Naive thymus-derived CD4-positive, alpha-beta T cell (primary cell): ENCODE measurements at regions of chr19 and their contacts with region 1.

Region 1: GRCh38 chr19:39445265-39446111 is at the start of gene SUPT5H:
- DNase-seq: peak; percentile 84 to 99 (median 97)
- ATAC-seq: peak; percentile 96
- H3K4me3 ChIP-seq: peak within 1 kb of the TSS; percentile 77
- H3K4me3 Mint-ChIP-seq: peak within 1 kb of the TSS; percentile 91 to 100 (median 97)
- H3K27ac ChIP-seq: peak within 1 kb of the TSS; percentile 98
- H3K27ac Mint-ChIP-seq: peak within 1 kb of the TSS; percentile 95 to 100 (median 99)
- H3K4me1 ChIP-seq: peaks cover 35 to 47% of the 10 kb centered on the region in 2 donors
- H3K4me1 Mint-ChIP-seq: peaks cover 38 to 61% (median 48%) of the 10 kb centered on the region in 7 donors
- H3K27me3 ChIP-seq: no peaks in the 10 kb centered on the region
- H3K27me3 Mint-ChIP-seq: no peaks in the 10 kb centered on the region
- total RNA-seq, gene SUPT5H: 180 to 247 (median 203) TPM

Region 2: GRCh38 chr19:39052243-39052746 is 393.2 kb before region 1 on chr19:
- CTCF ChIA-PET with region 1: no interaction called
- POLR2A ChIA-PET with region 1: no interaction called
- intact Hi-C with region 1: no loop called
- DNase-seq: peak; percentile 38 to 73 (median 57)
- ATAC-seq: peak; percentile 63
- H3K4me3 ChIP-seq: no peak overlapping the region
- H3K4me3 Mint-ChIP-seq: no peak overlapping the region
- H3K27ac ChIP-seq: no peak overlapping the region
- H3K27ac Mint-ChIP-seq: no peak overlapping the region
- H3K4me1 ChIP-seq: no peaks in the 10 kb centered on the region
- H3K4me1 Mint-ChIP-seq: no peaks in the 10 kb centered on the region
- H3K27me3 ChIP-seq: no peaks in the 10 kb centered on the region
- H3K27me3 Mint-ChIP-seq: peaks cover 0 to 3% (median 0%) of the 10 kb centered on the region in 5 donors

Region 3: DNA sequence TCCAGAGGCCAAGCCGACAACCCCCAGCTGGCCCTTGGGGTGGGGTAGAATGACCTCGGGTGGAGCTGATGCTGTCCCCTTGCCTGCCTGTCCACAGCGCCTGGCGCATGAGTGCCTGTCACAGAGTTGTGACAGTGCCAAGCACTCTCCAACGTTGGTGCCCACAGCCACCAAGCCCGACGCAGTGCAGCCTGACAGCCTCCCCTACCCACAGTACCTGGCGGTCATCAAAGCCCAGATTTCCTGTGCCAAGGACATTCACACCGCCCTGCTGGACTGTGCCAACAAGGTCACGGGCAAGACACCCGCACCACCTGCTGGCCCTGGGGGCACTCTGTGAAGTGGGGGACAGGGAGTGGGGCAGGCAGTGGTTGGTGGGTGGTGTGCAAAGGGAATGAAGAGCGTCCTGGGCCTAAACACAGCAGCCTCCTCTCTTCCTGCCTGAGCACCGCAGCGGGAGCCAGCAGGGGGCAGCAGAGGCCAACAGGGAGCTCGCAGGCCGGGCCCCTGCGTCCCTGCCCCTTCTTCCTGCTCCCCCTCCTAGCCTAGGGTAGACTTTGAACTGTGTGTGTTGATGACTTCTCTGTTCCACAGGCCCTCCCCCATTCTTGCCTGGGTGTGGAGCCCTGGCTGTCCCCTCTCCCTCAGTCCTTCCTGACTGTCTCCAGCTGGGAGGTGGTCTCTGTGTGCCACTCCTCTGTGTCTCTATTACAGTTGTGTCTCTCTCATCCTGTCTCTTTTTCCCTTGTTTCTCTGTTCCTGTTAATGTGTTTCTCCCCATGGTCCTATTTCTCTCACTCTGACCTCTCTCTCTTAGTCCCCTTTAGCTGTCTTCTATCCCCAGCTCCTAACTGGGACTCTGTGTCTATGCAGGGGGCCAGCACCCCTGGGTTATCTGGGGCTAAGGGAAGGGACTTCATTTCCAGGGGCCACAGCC is 47.9 kb before region 1 on chr19:
- CTCF ChIA-PET with region 1: no interaction called
- POLR2A ChIA-PET with region 1: interaction called, 26 read pairs
- intact Hi-C with region 1: no loop called
- DNase-seq: peak; percentile 88 to 97 (median 93)
- ATAC-seq: peak; percentile 71
- H3K4me3 ChIP-seq: peak overlapping the region; percentile 57
- H3K4me3 Mint-ChIP-seq: peak overlapping the region in 9 of 10 donors; percentile 48 to 80 (median 74)
- H3K27ac ChIP-seq: peak overlapping the region; percentile 63
- H3K27ac Mint-ChIP-seq: peak overlapping the region; percentile 84 to 96 (median 93)
- H3K4me1 ChIP-seq: peaks cover 39 to 42% of the 10 kb centered on the region in 2 donors
- H3K4me1 Mint-ChIP-seq: peaks cover 27 to 68% (median 56%) of the 10 kb centered on the region in 7 donors
- H3K27me3 ChIP-seq: no peaks in the 10 kb centered on the region
- H3K27me3 Mint-ChIP-seq: no peaks in the 10 kb centered on the region

Region 4: DNA sequence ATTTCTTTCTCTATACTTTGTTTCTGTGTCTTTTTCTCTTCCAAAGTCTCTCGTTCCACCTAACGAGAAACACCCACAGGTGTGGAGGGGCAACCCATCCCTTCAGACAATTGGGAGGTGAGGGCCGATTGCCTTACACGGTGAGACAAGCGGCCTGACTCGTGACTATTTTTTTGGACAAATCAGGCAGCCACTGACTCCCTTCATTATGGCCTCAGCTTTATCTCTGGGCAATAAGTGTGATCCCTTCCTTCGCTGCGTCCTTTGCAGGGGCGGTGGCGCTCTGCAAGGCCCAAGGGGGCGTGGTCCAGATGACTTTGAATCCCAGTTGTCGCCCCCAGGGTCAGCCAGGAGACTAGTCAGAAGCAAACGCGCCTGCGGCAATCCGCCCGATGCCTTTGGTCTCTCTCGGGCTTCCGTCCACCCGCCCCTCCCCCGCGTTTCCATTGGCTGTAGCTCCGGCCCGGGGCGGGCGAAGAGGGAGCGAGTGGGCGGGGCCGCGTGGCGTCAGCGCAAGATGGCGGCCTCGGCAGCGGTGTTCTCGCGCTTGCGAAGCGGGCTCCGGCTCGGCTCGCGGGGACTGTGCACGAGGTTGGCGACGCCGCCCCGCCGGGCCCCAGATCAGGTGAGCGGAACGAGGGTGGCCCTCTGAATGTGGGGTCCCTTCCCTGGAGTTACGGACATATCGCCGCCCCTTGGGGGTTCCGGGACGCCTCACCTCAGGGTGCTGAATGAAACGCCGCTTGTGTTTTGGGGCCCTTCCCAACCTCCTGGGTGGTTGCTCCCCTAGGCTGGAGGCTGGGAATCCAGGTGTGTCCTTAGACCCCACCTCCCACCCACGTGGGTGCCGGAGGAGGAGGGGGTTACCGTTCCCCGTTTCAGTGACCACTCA is 35.1 kb after region 1 on chr19 and contains the start of gene TIMM50:
- CTCF ChIA-PET with region 1: no interaction called
- POLR2A ChIA-PET with region 1: interaction called, 5 read pairs
- intact Hi-C with region 1: loop called (anchors 1 kb)
- DNase-seq: peak; percentile 93 to 98 (median 95)
- ATAC-seq: peak; percentile 100
- H3K4me3 ChIP-seq: peak within 1 kb of the TSS; percentile 74
- H3K4me3 Mint-ChIP-seq: peak within 1 kb of the TSS; percentile 86 to 97 (median 92)
- H3K27ac ChIP-seq: peak within 1 kb of the TSS; percentile 86
- H3K27ac Mint-ChIP-seq: peak within 1 kb of the TSS; percentile 80 to 97 (median 93)
- H3K4me1 ChIP-seq: peaks cover 10 to 11% of the 10 kb centered on the region in 2 donors
- H3K4me1 Mint-ChIP-seq: peaks cover 14 to 32% (median 25%) of the 10 kb centered on the region in 7 donors
- H3K27me3 ChIP-seq: no peaks in the 10 kb centered on the region
- H3K27me3 Mint-ChIP-seq: no peaks in the 10 kb centered on the region
- total RNA-seq, gene TIMM50: 43.5 to 70.0 (median 50.0) TPM

Region 5: GRCh38 chr19:39532233-39533002 is 86.9 kb after region 1 on chr19 and contains the start of gene EID2B:
- CTCF ChIA-PET with region 1: interaction called, 24 read pairs
- POLR2A ChIA-PET with region 1: interaction called, 15 read pairs
- intact Hi-C with region 1: loop called (anchors 1 kb)
- DNase-seq: peak; percentile 91 to 95 (median 93)
- ATAC-seq: peak; percentile 99
- H3K4me3 ChIP-seq: peak within 1 kb of the TSS; percentile 92
- H3K4me3 Mint-ChIP-seq: peak within 1 kb of the TSS; percentile 87 to 96 (median 92)
- H3K27ac ChIP-seq: peak within 1 kb of the TSS; percentile 82
- H3K27ac Mint-ChIP-seq: peak within 1 kb of the TSS; percentile 74 to 95 (median 92)
- H3K4me1 ChIP-seq: peaks cover 9 to 15% of the 10 kb centered on the region in 2 donors
- H3K4me1 Mint-ChIP-seq: peaks cover 20 to 55% (median 32%) of the 10 kb centered on the region in 7 donors
- H3K27me3 ChIP-seq: no peaks in the 10 kb centered on the region
- H3K27me3 Mint-ChIP-seq: no peaks in the 10 kb centered on the region
- total RNA-seq, gene EID2B: 4.4 to 8.5 (median 6.2) TPM

Region 6: DNA sequence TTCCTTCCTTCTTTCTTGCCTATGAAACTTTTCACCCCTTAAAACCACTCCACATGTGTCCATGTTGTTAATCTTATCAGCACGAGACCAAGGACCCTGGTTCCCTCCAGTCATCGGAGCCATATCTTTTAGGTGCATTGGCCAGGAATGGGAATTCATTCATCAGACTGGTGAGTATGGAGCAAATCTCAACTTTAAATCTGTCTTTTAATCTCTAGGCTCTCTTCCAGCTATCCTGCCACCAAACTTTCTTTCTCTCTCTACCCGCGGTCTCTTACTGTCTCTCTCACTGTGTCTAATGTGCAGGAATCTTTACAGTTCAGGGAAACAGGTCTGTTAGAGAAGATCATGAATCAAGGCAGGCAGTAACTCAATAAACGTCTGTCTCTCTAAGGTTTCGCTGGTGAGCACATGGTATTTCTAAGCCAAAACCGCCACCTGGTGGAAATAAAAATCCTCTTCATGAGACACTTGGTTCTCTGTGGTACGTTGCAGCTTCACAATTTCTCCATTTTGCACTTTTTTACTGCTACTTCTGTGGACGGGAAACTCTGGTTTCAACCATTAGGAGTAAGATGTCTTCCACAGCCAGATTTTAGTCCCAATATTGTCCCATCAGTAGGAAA is 226.4 kb after region 1 on chr19:
- CTCF ChIA-PET with region 1: interaction called, 38 read pairs
- POLR2A ChIA-PET with region 1: interaction called, 4 read pairs
- intact Hi-C with region 1: loop called (anchors 1 kb)
- DNase-seq: peak in 8 of 9 donors; percentile 32 to 73 (median 66)
- ATAC-seq: peak; percentile 79
- H3K4me3 ChIP-seq: no peak overlapping the region
- H3K4me3 Mint-ChIP-seq: peak overlapping the region in 7 of 10 donors; percentile 29 to 64 (median 36)
- H3K27ac ChIP-seq: no peak overlapping the region
- H3K27ac Mint-ChIP-seq: peak overlapping the region in 8 of 9 donors; percentile 24 to 81 (median 60)
- H3K4me1 ChIP-seq: peaks cover 4 to 25% of the 10 kb centered on the region in 2 donors
- H3K4me1 Mint-ChIP-seq: peaks cover 8 to 41% (median 35%) of the 10 kb centered on the region in 7 donors
- H3K27me3 ChIP-seq: no peaks in the 10 kb centered on the region
- H3K27me3 Mint-ChIP-seq: peaks cover 0 to 10% (median 5%) of the 10 kb centered on the region in 5 donors

Region 7: GRCh38 chr19:39833464-39834286 is 388.2 kb after region 1 on chr19 and contains the start of gene DYRK1B:
- CTCF ChIA-PET with region 1: no interaction called
- POLR2A ChIA-PET with region 1: interaction called, 9 read pairs
- intact Hi-C with region 1: loop called in 1 of 2 experiments (anchors 2 kb)
- DNase-seq: peak; percentile 90 to 99 (median 98)
- ATAC-seq: peak; percentile 92
- H3K4me3 ChIP-seq: peak within 1 kb of the TSS; percentile 100
- H3K4me3 Mint-ChIP-seq: peak within 1 kb of the TSS; percentile 60 to 88 (median 81)
- H3K27ac ChIP-seq: peak within 1 kb of the TSS; percentile 96
- H3K27ac Mint-ChIP-seq: peak within 1 kb of the TSS; percentile 85 to 96 (median 92)
- H3K4me1 ChIP-seq: peaks cover 17 to 23% of the 10 kb centered on the region in 2 donors
- H3K4me1 Mint-ChIP-seq: peaks cover 19 to 37% (median 27%) of the 10 kb centered on the region in 7 donors
- H3K27me3 ChIP-seq: no peaks in the 10 kb centered on the region
- H3K27me3 Mint-ChIP-seq: no peaks in the 10 kb centered on the region
- total RNA-seq, gene DYRK1B: 12.3 to 38.9 (median 23.5) TPM